OCI-LY7 (cell line): ENCODE measurements at regions of chr2 and their contacts with region 1.

Region 1: DNA sequence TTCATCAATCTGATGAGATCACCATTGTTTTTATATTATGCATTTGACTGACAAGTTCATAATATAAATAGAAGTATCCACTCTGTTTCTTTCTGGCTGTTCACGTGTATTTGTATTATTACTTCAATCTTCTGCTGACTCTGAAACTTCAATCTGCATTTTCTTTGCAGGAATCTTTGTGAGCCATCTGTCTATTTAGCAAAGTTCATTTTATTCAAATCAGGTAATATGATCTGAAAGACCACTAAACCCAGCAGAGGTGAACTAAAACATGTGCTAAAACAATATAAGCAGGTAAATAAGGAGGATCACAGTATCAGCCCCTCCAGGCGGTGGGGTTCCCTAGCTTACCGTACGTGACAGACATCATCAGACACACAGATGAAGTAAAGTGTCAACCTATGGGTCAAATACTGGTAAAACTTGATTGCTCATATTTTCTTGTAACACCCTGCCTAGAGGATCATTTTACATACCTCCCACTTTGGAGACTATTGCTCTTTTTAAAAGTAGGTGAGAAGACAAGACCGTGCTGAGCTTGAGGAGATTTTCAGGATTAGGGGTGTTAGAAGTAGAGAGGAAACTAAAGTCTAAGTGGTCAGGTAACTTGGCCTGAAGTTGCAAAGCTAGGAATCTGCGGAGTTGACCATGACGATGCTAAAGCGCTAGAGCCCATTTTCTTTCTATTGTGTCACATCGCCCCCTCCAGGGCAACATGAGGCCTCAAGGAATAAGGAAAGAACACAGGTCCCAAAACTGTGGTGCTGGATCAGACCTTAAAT is 9.0 kb downstream of the DTNB start:
- DNase-seq: peak; percentile 55
- H3K4me3 ChIP-seq: no peak overlapping the region
- H3K27ac ChIP-seq: no peak overlapping the region
- H3K4me1 ChIP-seq: no peaks in the 10 kb centered on the region
- CTCF ChIP-seq: peak; percentile 85

Region 2: GRCh38 chr2:25309402-25309801 is 355.0 kb before region 1 on chr2:
- CTCF ChIA-PET with region 1: no interaction called
- POLR2A ChIA-PET with region 1: no interaction called
- intact Hi-C with region 1: loop called (anchors 10 kb)
- DNase-seq: peak; percentile 77
- H3K4me3 ChIP-seq: no peak overlapping the region
- H3K27ac ChIP-seq: no peak overlapping the region
- H3K4me1 ChIP-seq: peaks cover 6% of the 10 kb centered on the region
- CTCF ChIP-seq: peak; percentile 80